ENCODE measurements at regions of chr2 and their contacts with region 1.

Region 1: DNA sequence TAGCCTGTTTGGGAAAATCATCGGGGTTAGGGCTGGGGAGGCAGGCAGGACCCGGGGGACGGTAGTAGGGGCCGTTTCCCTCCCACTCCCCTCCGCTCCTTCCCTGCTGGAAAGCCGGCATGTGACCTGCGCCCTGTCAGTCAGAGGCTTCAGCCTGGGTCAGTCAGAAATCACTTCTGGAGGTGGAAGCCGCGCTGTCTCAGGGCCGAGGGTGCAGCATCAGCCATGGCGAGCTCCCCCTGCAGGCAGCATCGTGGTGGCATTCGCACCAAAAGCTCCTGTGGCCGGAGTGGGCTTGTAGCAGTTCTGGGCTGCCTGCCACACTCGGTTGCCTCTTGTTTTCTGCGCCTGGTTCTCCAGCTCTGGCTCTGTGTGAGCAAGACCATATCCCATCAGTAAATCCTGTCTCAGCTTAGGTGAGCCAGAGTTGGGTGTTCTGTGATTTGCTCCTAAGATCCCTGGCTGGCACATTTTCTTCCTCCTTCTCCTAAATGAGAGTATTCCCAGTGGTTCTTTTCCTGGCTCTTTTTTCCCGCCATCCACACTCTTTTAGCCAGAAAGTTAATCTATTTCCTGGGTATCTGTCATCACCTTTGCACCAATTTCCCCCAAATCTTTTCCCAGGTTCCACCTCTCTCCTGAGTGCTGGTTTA is 123.9 kb upstream of the CD302 start:
- DNase-seq: no peak
- ATAC-seq: peak; percentile 97
- H3K4me3 ChIP-seq: 0 out of 2 replicates have a peak overlapping the region, but pooled peaks have one; percentile 16
- H3K27ac ChIP-seq: peak overlapping the region; percentile 4
- H3K4me1 ChIP-seq: peaks cover 13% of the 10 kb centered on the region
- H3K27me3 ChIP-seq: no peaks in the 10 kb centered on the region
- CTCF ChIP-seq: peak; percentile 91 to 96 (median 95)
- EP300 ChIP-seq: no peak
- POLR2A ChIP-seq: peak; percentile 35; the same call in 1 of the 2 replicates
- RAD21 ChIP-seq: peak; percentile 76

Region 2: DNA sequence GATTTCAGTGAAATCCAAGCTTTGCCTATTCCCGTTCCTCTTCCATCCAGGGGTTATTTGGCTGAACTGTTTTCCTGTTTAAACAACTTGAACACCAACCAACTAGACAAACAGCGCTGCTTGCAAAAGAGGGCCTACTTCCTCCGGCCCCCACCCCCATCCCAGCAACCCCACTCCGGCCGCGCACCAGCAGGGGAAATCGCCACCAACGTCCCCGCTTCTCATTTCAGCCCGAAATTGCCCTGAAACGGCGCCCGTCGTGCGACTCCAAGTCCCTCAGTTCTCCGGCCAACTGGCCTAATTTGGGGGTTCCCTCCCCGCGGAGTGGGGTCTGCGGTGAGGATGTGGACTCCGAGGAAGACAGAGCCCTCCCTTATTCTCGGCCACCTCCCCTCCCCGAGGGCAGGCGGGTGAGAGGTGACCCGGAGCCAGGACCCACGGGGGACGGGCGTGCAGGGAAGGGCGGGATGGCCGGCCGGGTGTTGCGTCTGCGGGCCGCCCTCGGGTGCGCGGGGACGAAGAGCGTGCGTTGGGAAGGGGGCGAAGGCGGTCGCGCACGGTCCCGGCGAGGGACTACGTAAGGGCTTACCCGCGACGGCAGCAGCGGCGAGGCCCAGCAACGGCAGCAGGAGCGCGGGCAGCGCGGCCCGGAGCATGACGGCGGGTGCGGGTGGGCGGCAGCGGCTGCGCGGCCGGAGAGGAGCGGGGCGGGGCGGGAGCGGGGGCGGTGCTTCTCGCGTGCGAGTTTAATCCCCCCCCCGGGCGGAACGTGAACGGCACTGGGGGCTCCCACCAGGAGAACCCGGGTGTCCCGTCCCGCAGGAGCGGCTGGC is 124.1 kb before region 1 on chr2 and contains the start of gene CD302:
- CTCF ChIA-PET with region 1: interaction called, 5 read pairs
- POLR2A ChIA-PET with region 1: no interaction called
- RAD21 ChIA-PET with region 1: no interaction called
- SMC1A ChIA-PET with region 1: interaction called, 4 read pairs
- in situ Hi-C with region 1: no loop called
- intact Hi-C with region 1: loop called (anchors 5 kb)
- DNase-seq: no peak
- ATAC-seq: peak; percentile 85
- H3K4me3 ChIP-seq: peak within 1 kb of the TSS; percentile 77
- H3K27ac ChIP-seq: no peak within 1 kb of the TSS
- H3K4me1 ChIP-seq: no peaks in the 10 kb centered on the region
- H3K27me3 ChIP-seq: no peaks in the 10 kb centered on the region
- CTCF ChIP-seq: no peak
- EP300 ChIP-seq: no peak
- POLR2A ChIP-seq: peak; percentile 71
- RAD21 ChIP-seq: no peak
- polyA plus RNA-seq, gene CD302: 0.48 to 0.64 TPM

Region 3: GRCh38 chr2:159807183-159808031 is 114.5 kb before region 1 on chr2:
- CTCF ChIA-PET with region 1: interaction called, 17 read pairs
- POLR2A ChIA-PET with region 1: no interaction called
- RAD21 ChIA-PET with region 1: no interaction called
- SMC1A ChIA-PET with region 1: interaction called, 8 read pairs
- in situ Hi-C with region 1: no loop called
- intact Hi-C with region 1: no loop called
- DNase-seq: no peak
- ATAC-seq: peak; percentile 64
- H3K4me3 ChIP-seq: no peak overlapping the region
- H3K27ac ChIP-seq: no peak overlapping the region
- H3K4me1 ChIP-seq: no peaks in the 10 kb centered on the region
- H3K27me3 ChIP-seq: no peaks in the 10 kb centered on the region
- CTCF ChIP-seq: peak; percentile 48 to 54 (median 53)
- EP300 ChIP-seq: no peak
- POLR2A ChIP-seq: no peak
- RAD21 ChIP-seq: peak; percentile 69

Region 4: DNA sequence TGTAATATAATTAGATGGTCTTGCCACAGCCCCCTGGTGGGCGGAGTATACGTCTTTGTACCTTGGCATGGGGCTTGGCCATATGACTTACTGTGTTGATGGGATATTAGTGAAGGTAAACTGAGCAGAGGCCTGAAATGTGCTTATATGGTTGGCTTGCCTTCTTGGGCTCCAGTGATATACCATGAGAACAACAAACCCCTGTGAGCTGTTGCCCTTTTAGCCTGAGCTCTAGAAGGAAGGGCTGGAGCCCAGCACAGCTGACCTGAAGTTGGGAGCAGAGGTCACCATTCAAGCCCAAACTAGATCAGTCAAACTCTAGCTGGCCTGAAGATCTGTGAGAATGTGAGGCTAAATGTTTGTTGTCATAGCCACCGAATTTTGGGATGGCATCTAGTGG is 48.6 kb before region 1 on chr2:
- CTCF ChIA-PET with region 1: interaction called, 15 read pairs
- POLR2A ChIA-PET with region 1: interaction called, 4 read pairs
- RAD21 ChIA-PET with region 1: interaction called, 3 read pairs
- SMC1A ChIA-PET with region 1: interaction called, 4 read pairs
- in situ Hi-C with region 1: no loop called
- intact Hi-C with region 1: no loop called
- DNase-seq: no peak
- ATAC-seq: peak; percentile 30
- H3K4me3 ChIP-seq: no peak overlapping the region
- H3K27ac ChIP-seq: no peak overlapping the region
- H3K4me1 ChIP-seq: no peaks in the 10 kb centered on the region
- H3K27me3 ChIP-seq: no peaks in the 10 kb centered on the region
- CTCF ChIP-seq: no peak
- EP300 ChIP-seq: no peak
- POLR2A ChIP-seq: no peak
- RAD21 ChIP-seq: no peak

Region 5: GRCh38 chr2:159904127-159904958 is 17.5 kb before region 1 on chr2:
- CTCF ChIA-PET with region 1: interaction called, 335 read pairs
- POLR2A ChIA-PET with region 1: interaction called, 840 read pairs
- RAD21 ChIA-PET with region 1: interaction called, 137 read pairs
- SMC1A ChIA-PET with region 1: interaction called, 1,536 read pairs
- in situ Hi-C with region 1: no loop called
- intact Hi-C with region 1: loop called (anchors 1 kb)
- DNase-seq: no peak
- ATAC-seq: peak; percentile 82
- H3K4me3 ChIP-seq: peak within 1 kb of the TSS; percentile 94
- H3K27ac ChIP-seq: peak within 1 kb of the TSS; percentile 83
- H3K4me1 ChIP-seq: peaks cover 25% of the 10 kb centered on the region
- H3K27me3 ChIP-seq: no peaks in the 10 kb centered on the region
- CTCF ChIP-seq: 0 out of 6 replicates have a peak, but pooled peaks of 1 of the 3 experiments have one; percentile 0
- EP300 ChIP-seq: no peak
- POLR2A ChIP-seq: peak; percentile 93
- RAD21 ChIP-seq: no peak

Region 6: GRCh38 chr2:159933727-159934049 is 11.8 kb after region 1 on chr2:
- CTCF ChIA-PET with region 1: interaction called, 68 read pairs
- POLR2A ChIA-PET with region 1: interaction called, 5 read pairs
- RAD21 ChIA-PET with region 1: interaction called, 45 read pairs
- SMC1A ChIA-PET with region 1: interaction called, 1,536 read pairs
- in situ Hi-C with region 1: no loop called
- intact Hi-C with region 1: no loop called
- DNase-seq: peak; percentile 70
- ATAC-seq: peak; percentile 92
- H3K4me3 ChIP-seq: peak overlapping the region; percentile 45
- H3K27ac ChIP-seq: peak overlapping the region; percentile 85
- H3K4me1 ChIP-seq: peaks cover 25% of the 10 kb centered on the region
- H3K27me3 ChIP-seq: no peaks in the 10 kb centered on the region
- CTCF ChIP-seq: no peak
- EP300 ChIP-seq: no peak
- POLR2A ChIP-seq: no peak
- RAD21 ChIP-seq: no peak

Region 7: DNA sequence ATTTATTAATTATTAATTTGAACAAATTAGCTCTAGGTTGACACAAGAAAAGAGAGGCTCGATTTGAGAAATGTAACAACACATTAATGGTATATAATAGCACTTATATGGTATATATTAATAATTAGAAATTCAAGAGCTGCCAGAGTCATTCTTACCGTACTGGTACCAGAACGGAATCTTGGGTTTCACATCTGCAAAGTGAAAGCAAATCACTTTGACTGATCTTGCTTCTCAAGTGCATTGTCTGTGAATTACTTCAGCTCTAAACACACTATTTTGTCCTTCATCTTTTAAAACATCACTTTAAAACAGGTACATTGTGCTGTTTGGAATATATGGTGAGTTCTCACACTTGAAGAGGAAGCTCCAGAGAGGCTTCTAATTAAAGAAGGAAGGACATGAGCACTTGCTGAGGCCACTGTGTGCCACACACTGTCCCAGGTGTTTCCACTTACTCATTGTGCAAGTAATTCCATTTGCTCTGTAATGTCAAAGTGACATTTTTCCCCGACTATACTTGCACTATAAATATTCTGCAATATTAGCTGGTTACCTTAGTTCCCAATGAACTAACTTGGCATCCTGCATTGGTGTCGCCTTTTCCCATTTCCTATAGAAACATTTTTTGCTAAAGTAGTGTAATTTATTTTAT is 54.8 kb after region 1 on chr2:
- CTCF ChIA-PET with region 1: no interaction called
- POLR2A ChIA-PET with region 1: no interaction called
- RAD21 ChIA-PET with region 1: no interaction called
- SMC1A ChIA-PET with region 1: no interaction called
- in situ Hi-C with region 1: no loop called
- intact Hi-C with region 1: no loop called
- DNase-seq: no peak
- ATAC-seq: peak; percentile 48; the same call in 2 of the 3 replicates
- H3K4me3 ChIP-seq: peak overlapping the region; percentile 45; the same call in 1 of the 2 replicates
- H3K27ac ChIP-seq: no peak overlapping the region
- H3K4me1 ChIP-seq: no peaks in the 10 kb centered on the region
- H3K27me3 ChIP-seq: no peaks in the 10 kb centered on the region
- CTCF ChIP-seq: no peak
- EP300 ChIP-seq: no peak
- POLR2A ChIP-seq: no peak
- RAD21 ChIP-seq: no peak

Region 8: DNA sequence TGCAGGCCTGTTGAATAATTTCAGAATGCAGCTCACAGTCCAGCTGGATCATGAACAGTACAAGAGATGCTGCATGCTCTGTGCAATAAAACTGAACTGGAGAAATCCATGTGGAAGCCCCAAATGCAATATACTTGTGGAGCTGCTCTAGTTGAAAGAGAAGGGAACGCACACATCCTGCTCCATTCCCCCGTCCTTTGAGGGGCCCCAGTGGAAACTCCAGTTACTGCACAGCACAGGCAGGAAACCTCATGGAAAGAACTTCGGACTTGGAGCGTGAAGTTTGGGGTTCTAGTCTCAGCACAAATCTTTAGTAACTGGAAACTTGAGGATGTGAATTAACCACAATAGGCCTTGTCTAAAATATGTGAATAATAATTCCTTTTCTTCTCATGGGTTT is 67.4 kb after region 1 on chr2:
- CTCF ChIA-PET with region 1: no interaction called
- POLR2A ChIA-PET with region 1: no interaction called
- RAD21 ChIA-PET with region 1: no interaction called
- SMC1A ChIA-PET with region 1: no interaction called
- in situ Hi-C with region 1: no loop called
- intact Hi-C with region 1: no loop called
- DNase-seq: no peak
- ATAC-seq: no peak
- H3K4me3 ChIP-seq: no peak overlapping the region
- H3K27ac ChIP-seq: no peak overlapping the region
- H3K4me1 ChIP-seq: no peaks in the 10 kb centered on the region
- H3K27me3 ChIP-seq: peaks cover 0 to 5% of the 10 kb centered on the region in 2 experiments; a peak in 2 of 4 replicates
- CTCF ChIP-seq: no peak
- EP300 ChIP-seq: no peak
- POLR2A ChIP-seq: no peak
- RAD21 ChIP-seq: no peak